ENCODE measurements at regions of chr11 and their contacts with region 1.

Region 1: GRCh38 chr11:120335908-120336640 is at the start of gene ARHGEF12:
- DNase-seq: peak; percentile 97
- ATAC-seq: peak; percentile 85
- total RNA-seq, gene ARHGEF12: 76.4 to 92.3 TPM

Region 2: GRCh38 chr11:120424185-120424969 is 88.3 kb after region 1 on chr11:
- intact Hi-C with region 1: loop called in 1 of 2 experiments (anchors 10 kb)
- DNase-seq: no peak
- ATAC-seq: no peak

Region 3: GRCh38 chr11:120432056-120433018 is 96.3 kb after region 1 on chr11:
- intact Hi-C with region 1: loop called (anchors 5 to 10 kb)
- DNase-seq: peak; percentile 33
- ATAC-seq: peak; percentile 94 to 98

Region 4: DNA sequence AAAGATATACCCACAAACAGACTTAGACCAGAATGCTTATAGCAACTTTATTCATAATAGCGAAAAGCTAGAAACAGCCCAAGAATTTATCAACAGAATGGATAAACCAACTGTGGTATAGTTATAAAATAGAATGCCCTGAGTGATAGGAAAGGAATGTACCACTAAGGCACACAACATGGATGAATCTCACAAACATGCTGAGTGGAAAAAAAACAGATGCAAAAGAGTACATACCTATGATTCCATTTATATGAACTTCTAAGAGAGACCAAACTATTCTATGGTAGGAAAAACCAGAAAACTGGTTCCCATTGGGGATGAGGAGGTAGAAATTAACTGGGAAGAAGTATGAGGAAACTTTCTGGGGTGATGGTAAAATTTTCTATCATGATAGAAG is 135.1 kb after region 1 on chr11:
- intact Hi-C with region 1: loop called in 1 of 2 experiments (anchors 10 kb)
- DNase-seq: no peak
- ATAC-seq: no peak

Measured in left cardiac atrium (tissue), 4 donors.